ENCODE measurements at regions of chr12 and their contacts with region 1.

Region 1: DNA sequence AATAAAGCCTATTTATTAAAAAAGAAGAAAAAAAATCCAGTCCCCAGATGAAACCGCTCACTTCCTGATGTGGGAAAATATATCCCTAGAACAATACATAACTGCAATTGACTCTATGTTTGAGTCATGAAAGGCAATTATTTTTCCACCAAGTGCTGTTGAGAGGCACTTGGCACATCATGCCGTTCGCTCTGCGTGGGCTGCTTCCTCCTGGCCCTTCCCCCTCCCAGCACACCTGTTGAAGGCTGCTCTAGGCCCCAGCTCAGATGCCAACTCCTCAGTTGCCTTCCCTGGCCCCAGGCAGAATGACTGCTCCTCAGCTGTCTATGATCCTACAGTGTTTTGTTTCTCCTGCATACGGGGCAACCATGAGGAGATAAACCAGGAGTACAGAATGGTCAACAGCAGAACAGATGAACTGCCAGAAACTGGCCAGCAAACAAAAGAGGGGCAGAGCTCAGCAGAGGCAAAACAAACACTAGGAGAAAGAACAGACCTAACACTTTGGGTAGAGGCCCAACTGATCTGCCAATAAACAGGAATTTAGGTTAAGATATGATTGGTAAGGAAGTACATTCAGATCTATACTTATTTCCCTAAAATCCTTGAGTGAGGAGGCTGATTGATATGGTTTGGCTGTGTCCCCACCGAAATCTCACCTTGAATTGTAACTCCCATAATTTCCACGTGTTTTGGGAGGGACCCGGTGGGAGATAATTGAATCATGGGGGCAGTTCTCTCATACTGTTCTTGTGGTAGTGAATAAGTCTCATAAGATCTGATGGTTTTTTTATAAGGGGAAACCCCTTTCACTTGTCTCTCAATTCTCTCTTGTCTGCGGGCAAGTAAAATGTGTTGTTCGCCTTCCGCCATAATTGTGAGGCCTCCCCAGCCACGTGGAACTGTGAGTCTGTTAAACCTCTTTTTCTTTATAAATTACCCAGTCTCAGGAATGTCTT is 58.6 kb downstream of the SLC38A1 start:
- DNase-seq: peak; percentile 88
- ATAC-seq: peak; percentile 71
- H3K4me3 Mint-ChIP-seq: peak overlapping the region; percentile 58
- H3K27ac Mint-ChIP-seq: peak overlapping the region; percentile 97
- H3K4me1 Mint-ChIP-seq: peaks cover 79% of the 10 kb centered on the region
- H3K27me3 Mint-ChIP-seq: no peaks in the 10 kb centered on the region

Region 2: GRCh38 chr12:46230983-46231382 is 20.8 kb after region 1 on chr12:
- CTCF ChIA-PET with region 1: interaction called, 4 read pairs
- POLR2A ChIA-PET with region 1: interaction called, 7 read pairs
- intact Hi-C with region 1: loop called (anchors 1 kb)
- DNase-seq: no peak
- ATAC-seq: peak; percentile 95
- H3K4me3 Mint-ChIP-seq: no peak overlapping the region
- H3K27ac Mint-ChIP-seq: no peak overlapping the region
- H3K4me1 Mint-ChIP-seq: peaks cover 63% of the 10 kb centered on the region
- H3K27me3 Mint-ChIP-seq: no peaks in the 10 kb centered on the region

Region 3: GRCh38 chr12:46556105-46556559 is 345.9 kb after region 1 on chr12:
- CTCF ChIA-PET with region 1: no interaction called
- POLR2A ChIA-PET with region 1: no interaction called
- intact Hi-C with region 1: loop called (anchors 2 to 10 kb)
- DNase-seq: no peak
- ATAC-seq: no peak
- H3K4me3 Mint-ChIP-seq: no peak overlapping the region
- H3K27ac Mint-ChIP-seq: no peak overlapping the region
- H3K4me1 Mint-ChIP-seq: peaks cover 41% of the 10 kb centered on the region
- H3K27me3 Mint-ChIP-seq: no peaks in the 10 kb centered on the region

Region 4: GRCh38 chr12:47361389-47362021 is 1151.3 kb after region 1 on chr12:
- CTCF ChIA-PET with region 1: no interaction called
- POLR2A ChIA-PET with region 1: no interaction called
- intact Hi-C with region 1: loop called in 1 of 2 experiments (anchors 10 kb)
- DNase-seq: peak; percentile 70
- ATAC-seq: peak; percentile 82
- H3K4me3 Mint-ChIP-seq: peak overlapping the region; percentile 74
- H3K27ac Mint-ChIP-seq: peak overlapping the region; percentile 99
- H3K4me1 Mint-ChIP-seq: peaks cover 62% of the 10 kb centered on the region
- H3K27me3 Mint-ChIP-seq: no peaks in the 10 kb centered on the region

Measured in activated CD4-positive, alpha-beta T cell treated with anti-CD3 and anti-CD28 coated beads for 36 hours (primary cell).